CD4-positive, alpha-beta memory T cell (primary cell): ENCODE measurements at regions of chr20 and their contacts with region 1.

Region 1: DNA sequence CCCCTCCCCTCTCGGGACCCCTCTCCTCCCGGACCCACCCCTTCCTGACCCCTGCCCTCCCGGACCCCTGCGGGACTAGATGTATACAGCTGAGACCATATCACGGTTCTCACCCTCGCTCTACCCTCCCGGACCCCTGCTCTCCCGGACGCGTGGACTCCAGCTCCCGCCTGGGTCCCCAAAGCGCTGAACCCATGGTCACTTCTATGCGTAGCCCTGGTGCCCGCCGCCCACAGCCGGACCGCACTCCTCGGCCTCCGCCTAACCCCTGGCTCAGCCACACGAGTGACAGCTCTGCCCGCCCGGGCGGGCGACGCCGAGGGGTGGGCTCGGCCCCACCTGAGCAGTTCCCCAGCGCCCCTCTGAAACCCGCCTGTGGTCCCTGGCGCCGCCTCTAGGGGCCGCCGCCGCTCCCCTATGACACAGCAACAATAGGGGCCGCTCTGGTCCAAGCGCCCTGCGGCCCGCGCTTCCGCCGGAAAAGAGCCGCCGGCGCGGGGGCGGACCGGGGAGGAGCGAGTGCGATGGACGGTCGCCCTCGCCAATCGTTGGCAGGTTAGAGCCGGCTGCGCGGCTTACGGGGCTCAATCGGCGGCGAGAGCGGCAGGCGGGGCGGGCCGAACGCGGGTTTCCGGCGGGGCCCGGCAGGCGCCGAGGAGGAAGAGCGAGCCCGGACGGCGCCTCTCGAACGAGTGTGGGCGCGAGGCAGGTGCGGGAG is at the start of gene ADRM1:
- DNase-seq: peak; percentile 94 to 99 (median 97)
- H3K4me3 ChIP-seq: peak within 1 kb of the TSS; percentile 69 to 96
- H3K4me3 Mint-ChIP-seq: peak within 1 kb of the TSS; percentile 93 to 100 (median 96)
- H3K27ac ChIP-seq: peak within 1 kb of the TSS; percentile 90
- H3K27ac Mint-ChIP-seq: peak within 1 kb of the TSS; percentile 98 to 99 (median 98)
- H3K4me1 ChIP-seq: peaks cover 30% of the 10 kb centered on the region
- H3K4me1 Mint-ChIP-seq: peaks cover 10 to 32% (median 23%) of the 10 kb centered on the region in 4 donors
- H3K27me3 ChIP-seq: no peaks in the 10 kb centered on the region
- H3K27me3 Mint-ChIP-seq: no peaks in the 10 kb centered on the region
- total RNA-seq, gene ADRM1: 59.4 to 62.2 TPM

Region 2: DNA sequence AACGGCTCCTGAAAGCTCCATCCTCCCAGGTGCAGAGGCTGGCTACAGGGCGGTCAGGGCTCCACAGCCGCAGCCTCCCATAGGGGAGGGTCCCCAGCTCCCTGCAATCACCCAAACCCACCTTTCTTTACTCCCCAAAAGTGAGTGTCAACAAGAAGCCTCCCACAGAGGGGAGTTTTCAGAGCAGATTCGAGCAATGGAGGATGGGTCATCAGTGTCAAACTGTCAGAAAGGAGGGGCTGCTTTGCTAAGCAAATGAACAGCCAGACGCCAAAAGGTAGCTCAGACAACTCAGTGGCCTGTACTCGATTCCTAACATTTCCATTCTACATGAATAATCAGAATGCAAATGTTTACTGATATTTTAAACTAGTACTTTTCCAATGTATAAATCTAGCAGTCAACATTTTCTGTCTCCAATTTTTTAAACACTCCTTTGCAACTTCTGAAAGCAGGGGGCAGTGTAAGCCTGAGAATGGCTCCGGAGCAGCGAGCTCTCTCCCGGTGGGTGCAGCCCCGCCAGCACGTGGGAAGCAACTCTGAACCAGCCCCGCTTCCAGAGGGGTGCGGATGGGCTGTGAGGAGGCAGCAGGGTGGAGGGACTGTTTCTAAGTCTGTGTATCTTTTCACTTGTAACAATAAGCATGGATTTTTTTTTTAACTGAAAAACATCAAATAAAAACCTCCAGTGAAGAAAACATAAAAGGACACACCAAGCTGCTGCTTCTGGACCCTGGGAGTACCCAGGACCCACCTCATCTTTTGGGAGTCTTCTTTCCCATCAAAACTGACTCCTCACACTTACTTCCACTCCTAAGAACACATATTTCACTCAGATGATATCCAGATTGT is 291.7 kb before region 1 on chr20:
- CTCF ChIA-PET with region 1: interaction called, 10 read pairs
- POLR2A ChIA-PET with region 1: no interaction called
- intact Hi-C with region 1: loop called (anchors 5 kb)
- DNase-seq: peak; percentile 63 to 70 (median 68)
- H3K4me3 ChIP-seq: no peak overlapping the region
- H3K4me3 Mint-ChIP-seq: peak overlapping the region in 1 of 8 donors; percentile 3
- H3K27ac ChIP-seq: no peak overlapping the region
- H3K27ac Mint-ChIP-seq: peak overlapping the region in 5 of 7 donors; percentile 4 to 76 (median 51)
- H3K4me1 ChIP-seq: no peaks in the 10 kb centered on the region
- H3K4me1 Mint-ChIP-seq: peaks cover 7 to 14% (median 9%) of the 10 kb centered on the region in 4 donors
- H3K27me3 ChIP-seq: no peaks in the 10 kb centered on the region
- H3K27me3 Mint-ChIP-seq: no peaks in the 10 kb centered on the region

Region 3: GRCh38 chr20:62182613-62183425 is 119.7 kb before region 1 on chr20 and contains the start of gene MTG2:
- CTCF ChIA-PET with region 1: no interaction called
- POLR2A ChIA-PET with region 1: no interaction called
- intact Hi-C with region 1: loop called (anchors 1 kb)
- DNase-seq: peak; percentile 91 to 96 (median 93)
- H3K4me3 ChIP-seq: peak within 1 kb of the TSS; percentile 53 to 92
- H3K4me3 Mint-ChIP-seq: peak within 1 kb of the TSS; percentile 91 to 97 (median 92)
- H3K27ac ChIP-seq: peak within 1 kb of the TSS; percentile 94
- H3K27ac Mint-ChIP-seq: peak within 1 kb of the TSS; percentile 93 to 98 (median 96)
- H3K4me1 ChIP-seq: peaks cover 22% of the 10 kb centered on the region
- H3K4me1 Mint-ChIP-seq: peaks cover 23 to 51% (median 37%) of the 10 kb centered on the region in 4 donors
- H3K27me3 ChIP-seq: no peaks in the 10 kb centered on the region
- H3K27me3 Mint-ChIP-seq: no peaks in the 10 kb centered on the region
- total RNA-seq, gene MTG2: 48.5 to 50.7 TPM

Region 4: GRCh38 chr20:62266340-62266739 is 36.2 kb before region 1 on chr20:
- CTCF ChIA-PET with region 1: no interaction called
- POLR2A ChIA-PET with region 1: no interaction called
- intact Hi-C with region 1: no loop called
- DNase-seq: no peak
- H3K4me3 ChIP-seq: no peak overlapping the region
- H3K4me3 Mint-ChIP-seq: no peak overlapping the region
- H3K27ac ChIP-seq: no peak overlapping the region
- H3K27ac Mint-ChIP-seq: no peak overlapping the region
- H3K4me1 ChIP-seq: no peaks in the 10 kb centered on the region
- H3K4me1 Mint-ChIP-seq: peaks cover 0 to 4% (median 3%) of the 10 kb centered on the region in 4 donors
- H3K27me3 ChIP-seq: no peaks in the 10 kb centered on the region
- H3K27me3 Mint-ChIP-seq: no peaks in the 10 kb centered on the region

Region 5: DNA sequence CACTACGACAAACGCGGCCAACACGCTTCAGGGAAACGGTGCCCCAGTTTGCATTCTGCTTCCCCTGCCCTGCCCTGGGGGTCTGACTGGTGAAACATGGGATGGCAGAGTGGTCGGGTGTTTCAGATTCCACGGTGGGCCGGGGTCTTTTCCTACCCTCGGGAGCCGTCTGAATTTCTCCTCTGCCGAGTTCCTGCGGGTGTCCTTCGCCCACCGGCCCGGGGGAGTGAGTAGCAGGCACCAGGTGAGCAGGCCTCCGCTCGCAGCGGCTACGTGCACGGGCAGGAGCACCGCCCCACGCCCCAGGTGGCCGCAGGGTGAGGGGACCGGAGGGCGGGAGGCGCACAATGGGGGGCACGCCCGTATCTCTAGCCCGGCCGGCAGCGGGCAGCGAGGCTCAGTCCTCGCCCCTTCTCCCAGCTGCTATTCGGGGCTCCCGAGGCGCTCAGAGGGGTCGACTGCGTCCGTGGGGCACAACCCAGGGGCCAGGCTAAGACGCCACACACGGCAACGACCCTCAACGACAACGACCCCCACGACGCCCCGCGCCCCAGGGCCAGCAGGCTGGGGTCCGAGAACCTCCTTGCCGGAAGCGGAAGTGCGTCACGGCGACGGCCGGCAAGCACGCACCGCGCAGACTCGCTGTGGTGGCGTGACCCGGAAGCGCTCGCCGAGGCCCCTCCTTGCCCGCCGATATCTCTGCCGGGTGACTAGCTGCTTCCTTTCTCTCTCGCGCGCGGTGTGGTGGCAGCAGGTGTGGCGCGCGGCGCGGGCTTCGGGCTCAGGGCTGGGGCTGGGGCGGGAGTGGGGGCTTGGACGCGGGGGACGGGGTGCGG is 84.1 kb after region 1 on chr20 and contains the start of gene RPS21:
- CTCF ChIA-PET with region 1: interaction called, 23 read pairs
- POLR2A ChIA-PET with region 1: interaction called, 19 read pairs
- intact Hi-C with region 1: loop called (anchors 1 kb)
- DNase-seq: peak; percentile 92 to 94 (median 94)
- H3K4me3 ChIP-seq: peak within 1 kb of the TSS; percentile 88 to 90
- H3K4me3 Mint-ChIP-seq: peak within 1 kb of the TSS; percentile 90 to 95 (median 92)
- H3K27ac ChIP-seq: peak within 1 kb of the TSS; percentile 95
- H3K27ac Mint-ChIP-seq: peak within 1 kb of the TSS; percentile 91 to 98 (median 96)
- H3K4me1 ChIP-seq: peaks cover 36% of the 10 kb centered on the region
- H3K4me1 Mint-ChIP-seq: peaks cover 30 to 61% (median 47%) of the 10 kb centered on the region in 4 donors
- H3K27me3 ChIP-seq: no peaks in the 10 kb centered on the region
- H3K27me3 Mint-ChIP-seq: no peaks in the 10 kb centered on the region
- total RNA-seq, gene RPS21: 3,142 to 3,368 TPM

Region 6: DNA sequence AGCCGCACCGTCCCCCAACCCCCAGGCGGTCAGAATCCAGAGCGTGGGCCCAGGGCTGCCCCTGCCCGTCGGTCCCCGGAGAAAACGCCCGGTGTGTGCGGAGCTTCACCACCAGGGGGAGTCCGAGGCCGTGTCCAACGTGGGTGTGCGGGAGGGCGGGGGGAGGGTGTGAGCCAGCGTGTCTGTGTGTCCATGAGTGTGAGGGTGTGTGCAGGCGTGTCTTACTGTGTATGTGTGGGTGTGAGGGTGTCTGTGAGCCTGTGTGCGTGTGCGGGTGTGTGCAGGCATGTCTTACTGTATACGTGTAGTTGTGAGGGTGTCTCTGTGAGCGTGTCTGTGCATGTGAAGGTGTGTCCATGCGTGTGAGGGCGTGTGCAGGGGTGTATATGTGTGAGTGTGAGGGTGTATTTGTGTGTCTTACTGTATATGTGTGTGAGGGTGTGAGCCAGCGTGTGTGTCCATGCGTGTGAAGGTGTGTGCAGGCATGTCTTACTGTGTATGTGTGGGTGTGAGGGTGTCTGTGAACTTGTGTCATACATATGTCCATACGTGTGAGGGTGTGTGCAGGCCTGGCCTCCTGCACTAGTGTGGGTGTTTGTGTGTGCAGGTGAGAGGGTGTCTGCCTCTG is 197.9 kb after region 1 on chr20:
- CTCF ChIA-PET with region 1: no interaction called
- POLR2A ChIA-PET with region 1: no interaction called
- intact Hi-C with region 1: loop called (anchors 1 kb)
- DNase-seq: peak; percentile 64 to 78 (median 66)
- H3K4me3 ChIP-seq: no peak overlapping the region
- H3K4me3 Mint-ChIP-seq: peak overlapping the region in 1 of 8 donors; percentile 48
- H3K27ac ChIP-seq: no peak overlapping the region
- H3K27ac Mint-ChIP-seq: peak overlapping the region in 4 of 7 donors; percentile 59 to 89 (median 61)
- H3K4me1 ChIP-seq: peaks cover 14% of the 10 kb centered on the region
- H3K4me1 Mint-ChIP-seq: peaks cover 11 to 23% (median 17%) of the 10 kb centered on the region in 4 donors
- H3K27me3 ChIP-seq: no peaks in the 10 kb centered on the region
- H3K27me3 Mint-ChIP-seq: peaks cover 0 to 2% of the 10 kb centered on the region in 2 donors